Activated T-helper 1 cell treated with anti-CD3 and anti-CD28 coated beads, Interleukin-12 subunit alpha, Interleukin-12 subunit beta, Interleukin-2, Interleukin-4 antibody, amounts not matched to agents 30 ng/mL and 10 ng/mL and 1 ng/mL, durations not matched to agents 14 hours and 24 hours and 36 hours (primary cell): ENCODE measurements at regions of chr7 and their contacts with region 1.

Region 1: DNA sequence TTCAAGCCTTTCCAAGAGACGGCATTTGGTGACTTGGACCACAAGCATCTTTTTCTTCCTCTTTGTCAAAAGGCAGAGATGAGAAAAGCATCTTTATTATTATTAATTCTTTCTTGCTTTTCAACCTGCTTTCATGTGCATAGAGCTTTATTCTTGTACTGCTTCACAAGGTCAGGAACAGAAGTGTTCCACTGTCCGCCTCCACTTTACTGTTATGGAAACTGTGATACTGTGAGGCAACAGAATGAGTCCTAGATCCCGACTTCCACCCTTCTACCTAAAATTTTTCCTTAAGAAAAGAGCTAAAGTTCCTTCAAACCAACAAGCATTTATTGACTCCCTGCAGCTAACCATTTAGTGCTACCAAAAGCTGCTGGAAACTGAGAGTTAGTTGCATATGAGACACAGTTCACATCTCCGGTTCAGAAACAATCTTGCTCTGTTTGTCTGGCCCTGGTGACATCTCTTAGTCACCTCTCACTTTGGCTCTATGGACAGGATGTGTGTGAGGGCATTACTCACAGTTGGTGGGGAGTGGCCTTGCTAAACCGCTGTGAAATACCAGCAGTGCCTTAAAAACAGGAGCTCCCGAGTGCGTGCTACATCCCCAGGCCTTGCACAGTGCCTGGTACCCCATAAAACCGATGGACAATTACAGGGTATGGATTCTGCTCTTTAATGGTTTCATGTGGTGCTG is 77.1 kb upstream of the TRIL start:
- DNase-seq: peak; percentile 12
- H3K4me3 Mint-ChIP-seq: peak overlapping the region; percentile 41
- H3K27ac Mint-ChIP-seq: peak overlapping the region; percentile 85
- H3K4me1 Mint-ChIP-seq: peaks cover 42% of the 10 kb centered on the region
- H3K27me3 Mint-ChIP-seq: no peaks in the 10 kb centered on the region

Region 2: DNA sequence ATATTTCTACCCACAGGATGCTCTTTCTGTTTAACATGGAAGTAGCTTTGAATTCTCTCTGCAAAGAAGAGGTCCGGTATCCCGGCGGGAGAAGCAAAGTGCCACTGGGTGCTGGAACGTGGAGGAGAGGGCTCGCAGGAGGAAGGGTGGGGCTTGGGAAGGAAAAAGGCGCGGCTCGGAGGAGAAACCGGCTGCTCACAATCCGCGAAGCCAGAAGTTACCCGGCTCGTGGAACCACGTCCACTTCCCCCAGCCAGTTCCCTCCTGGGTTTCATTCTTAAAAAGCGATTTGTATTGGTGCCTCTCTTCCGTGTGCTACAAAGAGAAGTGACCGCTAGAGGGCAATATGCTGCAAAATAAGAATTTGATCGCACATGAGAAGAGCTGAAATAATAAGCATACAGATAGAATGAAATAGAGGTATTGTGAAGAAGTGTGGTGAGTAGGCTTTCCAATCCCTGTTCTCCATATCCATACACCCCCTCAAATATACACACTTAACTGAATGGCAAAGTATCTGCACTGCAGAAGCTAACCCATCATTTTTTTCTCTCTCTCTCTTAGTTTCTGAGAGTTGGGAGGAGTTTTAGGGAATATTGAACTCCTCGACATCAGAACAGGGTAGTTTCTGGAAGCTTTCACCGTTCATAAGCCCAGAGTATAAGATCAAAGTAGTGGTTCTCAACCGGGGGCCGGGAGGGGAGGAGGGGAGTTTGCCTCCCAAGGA is 108.2 kb before region 1 on chr7:
- intact Hi-C with region 1: loop called (anchors 2 kb)
- DNase-seq: peak; percentile 44
- H3K4me3 Mint-ChIP-seq: peak overlapping the region; percentile 79
- H3K27ac Mint-ChIP-seq: no peak overlapping the region
- H3K4me1 Mint-ChIP-seq: peaks cover 25% of the 10 kb centered on the region
- H3K27me3 Mint-ChIP-seq: peaks cover 27% of the 10 kb centered on the region

Region 3: DNA sequence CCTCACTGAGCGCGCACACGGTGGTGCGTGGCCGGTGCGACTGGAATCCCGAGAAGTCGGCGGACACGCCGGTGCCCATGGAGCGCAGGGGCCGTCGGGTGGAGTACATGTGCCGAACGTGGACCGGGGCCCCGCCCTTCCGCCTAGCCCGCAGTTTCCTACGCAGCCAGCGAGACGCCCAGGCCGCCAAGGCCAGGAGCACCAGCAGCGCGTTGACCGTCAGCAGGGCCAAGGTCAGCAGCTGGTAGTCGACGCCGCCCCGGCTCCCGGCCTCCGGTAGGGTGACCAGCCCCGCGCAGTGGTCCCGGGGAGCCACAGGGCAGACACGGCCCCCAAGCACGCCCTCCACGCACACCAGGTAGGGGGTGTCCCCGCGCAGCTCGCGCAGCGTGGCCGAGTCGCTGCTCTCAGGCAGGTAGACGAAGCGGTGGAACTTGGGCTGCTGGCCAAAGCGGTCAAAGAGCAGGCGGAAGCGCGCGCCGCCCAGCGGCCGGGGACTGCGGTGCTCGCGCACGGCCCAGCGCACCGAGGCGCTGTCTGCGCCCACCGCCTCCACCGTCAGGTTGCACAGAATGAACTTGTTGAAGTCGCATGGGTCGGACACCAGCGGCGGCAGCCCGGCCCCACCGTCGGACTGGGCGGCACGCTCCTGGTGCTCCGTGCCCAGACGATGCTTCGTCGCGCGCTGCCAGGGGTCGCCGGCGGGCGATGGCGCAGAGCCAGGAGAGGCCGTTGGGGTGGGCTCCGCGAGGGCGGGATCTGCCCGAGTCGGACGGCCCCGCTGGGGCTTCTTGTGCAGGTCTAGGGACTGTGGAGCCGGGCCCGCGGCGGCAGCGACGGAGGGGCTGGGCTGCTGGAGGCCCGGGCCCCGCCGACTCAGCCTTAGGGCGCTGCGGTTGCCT is 79.2 kb before region 1 on chr7:
- intact Hi-C with region 1: loop called (anchors 5 kb)
- DNase-seq: no peak
- H3K4me3 Mint-ChIP-seq: no peak overlapping the region
- H3K27ac Mint-ChIP-seq: no peak overlapping the region
- H3K4me1 Mint-ChIP-seq: no peaks in the 10 kb centered on the region
- H3K27me3 Mint-ChIP-seq: peaks cover 53% of the 10 kb centered on the region

Region 4: GRCh38 chr7:29053105-29053872 is 18.1 kb after region 1 on chr7:
- intact Hi-C with region 1: loop called (anchors 1 kb)
- DNase-seq: no peak
- H3K4me3 Mint-ChIP-seq: no peak overlapping the region
- H3K27ac Mint-ChIP-seq: peak overlapping the region; percentile 2
- H3K4me1 Mint-ChIP-seq: no peaks in the 10 kb centered on the region
- H3K27me3 Mint-ChIP-seq: no peaks in the 10 kb centered on the region

Region 5: DNA sequence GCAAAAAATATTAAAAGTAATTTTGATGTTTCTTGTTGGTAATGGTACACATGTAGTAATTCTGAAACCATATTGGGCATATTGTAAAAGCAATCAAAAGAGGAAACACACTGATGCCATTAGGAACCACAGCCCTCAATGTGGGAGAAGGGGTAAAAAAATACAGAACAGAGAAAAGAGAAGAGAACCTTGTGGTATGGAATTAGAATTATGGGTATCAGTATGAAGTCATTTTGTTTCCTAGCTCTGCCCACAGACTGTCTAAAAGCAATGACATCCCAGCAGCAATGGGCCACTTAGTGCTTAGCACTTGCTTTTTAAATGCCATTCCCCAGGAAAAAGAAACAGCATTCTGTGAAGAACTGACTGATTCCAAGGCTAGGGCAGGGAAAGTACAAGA is 49.6 kb after region 1 on chr7:
- intact Hi-C with region 1: loop called (anchors 2 kb)
- DNase-seq: no peak
- H3K4me3 Mint-ChIP-seq: no peak overlapping the region
- H3K27ac Mint-ChIP-seq: no peak overlapping the region
- H3K4me1 Mint-ChIP-seq: peaks cover 17% of the 10 kb centered on the region
- H3K27me3 Mint-ChIP-seq: peaks cover 5% of the 10 kb centered on the region

Region 6: DNA sequence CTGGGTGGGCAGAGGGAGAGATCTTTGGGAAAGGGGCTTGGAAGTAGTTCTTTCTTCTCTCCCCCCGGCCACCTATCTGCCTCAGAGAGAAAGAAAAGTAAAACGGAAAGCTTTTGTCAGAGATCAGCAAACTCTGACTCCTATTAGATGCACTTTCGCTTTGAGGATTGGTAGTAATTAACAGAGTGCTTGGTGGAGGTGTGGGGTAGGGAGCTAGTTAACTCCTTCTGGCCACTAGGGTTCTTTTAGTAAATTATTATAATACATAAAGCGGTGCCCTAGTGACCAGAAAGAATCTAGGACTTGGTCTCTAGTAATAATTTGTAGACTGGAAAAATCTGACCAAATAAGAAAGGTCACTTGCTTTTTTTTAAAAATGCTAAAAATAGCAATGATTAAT is 56.5 kb after region 1 on chr7:
- intact Hi-C with region 1: loop called (anchors 2 kb)
- DNase-seq: no peak
- H3K4me3 Mint-ChIP-seq: peak overlapping the region; percentile 77
- H3K27ac Mint-ChIP-seq: no peak overlapping the region
- H3K4me1 Mint-ChIP-seq: peaks cover 16% of the 10 kb centered on the region
- H3K27me3 Mint-ChIP-seq: peaks cover 3% of the 10 kb centered on the region

Region 7: GRCh38 chr7:29274146-29275017 is 239.2 kb after region 1 on chr7:
- intact Hi-C with region 1: loop called (anchors 10 kb)
- DNase-seq: no peak
- H3K4me3 Mint-ChIP-seq: no peak overlapping the region
- H3K27ac Mint-ChIP-seq: no peak overlapping the region
- H3K4me1 Mint-ChIP-seq: peaks cover 17% of the 10 kb centered on the region
- H3K27me3 Mint-ChIP-seq: peaks cover 17% of the 10 kb centered on the region

Region 8: DNA sequence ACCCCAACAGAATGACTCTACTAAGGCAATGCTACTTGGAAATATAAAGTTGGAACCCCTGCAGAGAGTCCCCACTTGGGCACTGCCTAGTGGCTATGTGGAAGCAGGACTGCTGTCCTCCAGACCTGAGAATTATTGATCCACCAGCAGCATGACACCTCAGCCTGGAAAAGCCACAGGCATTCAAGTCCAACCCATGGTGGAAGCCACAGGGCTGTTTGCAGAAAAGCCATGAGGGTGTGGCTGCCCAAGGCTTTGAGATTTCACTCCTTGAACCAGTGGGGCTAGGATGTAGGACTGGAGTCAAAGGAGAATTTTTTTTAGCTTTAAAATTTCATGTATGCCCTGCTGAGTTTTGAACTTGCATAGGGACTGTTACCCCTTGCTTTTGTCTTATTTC is 1915.0 kb after region 1 on chr7:
- intact Hi-C with region 1: no loop called
- DNase-seq: no peak
- H3K4me3 Mint-ChIP-seq: no peak overlapping the region
- H3K27ac Mint-ChIP-seq: no peak overlapping the region
- H3K4me1 Mint-ChIP-seq: no peaks in the 10 kb centered on the region
- H3K27me3 Mint-ChIP-seq: peaks cover 10% of the 10 kb centered on the region